ENCODE measurements at regions of chr7 and their contacts with region 1.

Region 1: DNA sequence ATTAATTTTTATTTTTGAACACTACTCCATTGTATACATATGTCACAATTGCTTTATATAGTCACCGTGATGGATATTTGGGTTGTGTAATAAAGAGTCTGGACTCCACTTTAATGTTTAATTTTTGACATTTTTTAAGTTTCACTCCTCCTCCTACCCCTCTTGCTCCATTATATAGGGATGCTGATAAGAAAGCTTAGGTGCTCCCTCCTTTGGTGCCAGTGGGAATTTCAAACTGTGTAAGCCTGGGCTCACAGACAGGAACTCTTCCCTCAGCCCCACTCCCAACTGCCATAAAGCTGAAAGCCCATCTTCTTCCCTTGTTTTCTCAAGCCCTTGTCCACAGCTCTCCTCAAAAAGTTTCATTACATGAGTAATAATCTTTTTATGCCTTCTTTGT is 47.6 kb downstream of the TWIST1 start:
- DNase-seq: no peak
- H3K4me3 ChIP-seq: no peak overlapping the region
- H3K27ac ChIP-seq: no peak overlapping the region
- H3K27me3 ChIP-seq: no peaks in the 10 kb centered on the region
- CTCF ChIP-seq: peak; percentile 37; the same call in 1 of the 2 replicates

Region 2: DNA sequence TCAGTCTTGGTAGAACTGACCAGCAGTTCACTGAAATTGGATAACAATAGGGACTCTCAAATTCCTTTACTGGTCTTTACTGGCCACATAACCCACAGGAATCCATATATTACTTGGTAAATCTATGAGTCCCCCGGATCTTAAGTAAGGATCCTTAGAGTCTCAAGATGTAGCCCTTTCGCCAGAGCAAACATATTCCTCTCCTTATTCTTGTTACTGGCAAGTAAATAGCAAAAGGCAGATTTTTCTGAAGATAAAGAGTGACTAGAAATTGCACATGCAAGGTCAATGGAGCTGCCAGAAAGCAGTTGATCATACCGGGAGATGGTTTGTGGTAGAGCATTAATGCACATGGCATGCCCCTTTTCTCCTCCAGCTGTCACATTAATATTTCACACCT is 291.2 kb before region 1 on chr7:
- CTCF ChIA-PET with region 1: no interaction called
- POLR2A ChIA-PET with region 1: no interaction called
- DNase-seq: no peak
- H3K4me3 ChIP-seq: no peak overlapping the region
- H3K27ac ChIP-seq: no peak overlapping the region
- H3K27me3 ChIP-seq: no peaks in the 10 kb centered on the region
- CTCF ChIP-seq: no peak

Region 3: GRCh38 chr7:19051767-19052375 is 18.0 kb before region 1 on chr7:
- CTCF ChIA-PET with region 1: interaction called, 13 read pairs
- POLR2A ChIA-PET with region 1: no interaction called
- DNase-seq: no peak
- H3K4me3 ChIP-seq: no peak overlapping the region
- H3K27ac ChIP-seq: no peak overlapping the region
- H3K27me3 ChIP-seq: no peaks in the 10 kb centered on the region
- CTCF ChIP-seq: peak; percentile 65